Ovary (tissue), 10 donors: ENCODE measurements at regions of chr4 and their contacts with region 1.

Region 1: DNA sequence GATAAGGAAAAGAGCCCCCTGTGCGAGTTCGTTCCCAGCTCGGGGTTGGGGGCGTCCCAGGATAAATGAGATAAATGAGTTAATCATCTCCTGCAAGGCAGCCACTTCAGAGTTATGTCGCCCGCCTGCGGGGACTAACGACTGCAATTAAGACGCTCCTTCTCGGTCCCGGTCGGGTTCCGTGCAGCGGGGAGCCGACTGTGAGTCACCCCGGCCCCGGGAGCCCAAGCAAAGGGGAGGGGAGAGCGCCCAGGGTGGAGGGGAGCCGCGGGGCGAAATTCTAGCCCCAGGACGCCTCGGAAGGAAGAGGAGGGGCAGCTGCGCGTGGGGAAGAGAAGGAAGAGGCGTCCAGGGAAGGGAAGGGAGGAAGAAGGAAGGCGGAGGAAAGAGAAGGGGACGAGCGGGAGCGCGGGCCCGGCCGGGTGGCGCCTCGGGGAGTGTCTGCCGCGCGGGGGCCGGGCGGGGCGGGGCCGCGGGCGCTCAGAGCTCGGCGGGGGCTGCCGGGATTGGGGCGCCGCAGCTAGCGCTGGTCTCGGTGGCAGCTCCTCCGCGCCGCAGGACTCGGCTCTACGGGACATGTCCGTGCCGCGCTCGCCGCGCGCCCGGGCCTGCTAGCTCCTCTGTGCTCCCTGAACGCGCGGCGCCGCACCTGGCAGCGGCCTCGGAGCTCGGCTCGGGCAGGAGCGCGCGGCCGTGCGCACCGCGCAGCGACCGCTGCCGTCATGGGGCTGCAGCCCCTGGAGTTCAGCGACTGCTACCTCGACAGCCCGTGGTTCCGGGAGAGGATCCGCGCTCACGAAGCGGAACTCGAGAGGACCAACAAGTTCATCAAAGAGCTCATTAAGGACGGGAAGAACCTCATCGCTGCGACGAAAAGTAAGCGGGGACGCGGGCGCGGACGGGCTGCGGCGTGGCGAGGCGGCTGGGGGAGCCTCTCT is at the start of gene ARHGAP10:
- DNase-seq: peak; percentile 76 to 86 (median 81)
- H3K4me3 ChIP-seq: peak within 1 kb of the TSS; percentile 72
- H3K27ac ChIP-seq: peak within 1 kb of the TSS; percentile 95 to 97
- H3K4me1 ChIP-seq: peaks cover 8% of the 10 kb centered on the region
- H3K27me3 ChIP-seq: no peaks in the 10 kb centered on the region
- CTCF ChIP-seq: peak in 1 of 3 donors; percentile 37
- EP300 ChIP-seq: no peak
- POLR2A ChIP-seq: peak; percentile 59
- total RNA-seq, gene ARHGAP10: 51.1 to 76.7 (median 70.6) TPM

Region 2: GRCh38 chr4:147813109-147813773 is 81.4 kb after region 1 on chr4:
- intact Hi-C with region 1: loop called in 1 of 4 experiments (anchors 10 kb)
- DNase-seq: no peak
- H3K4me3 ChIP-seq: no peak overlapping the region
- H3K27ac ChIP-seq: no peak overlapping the region
- H3K4me1 ChIP-seq: peaks cover 40% of the 10 kb centered on the region
- H3K27me3 ChIP-seq: no peaks in the 10 kb centered on the region
- CTCF ChIP-seq: no peak
- EP300 ChIP-seq: no peak
- POLR2A ChIP-seq: no peak

Region 3: DNA sequence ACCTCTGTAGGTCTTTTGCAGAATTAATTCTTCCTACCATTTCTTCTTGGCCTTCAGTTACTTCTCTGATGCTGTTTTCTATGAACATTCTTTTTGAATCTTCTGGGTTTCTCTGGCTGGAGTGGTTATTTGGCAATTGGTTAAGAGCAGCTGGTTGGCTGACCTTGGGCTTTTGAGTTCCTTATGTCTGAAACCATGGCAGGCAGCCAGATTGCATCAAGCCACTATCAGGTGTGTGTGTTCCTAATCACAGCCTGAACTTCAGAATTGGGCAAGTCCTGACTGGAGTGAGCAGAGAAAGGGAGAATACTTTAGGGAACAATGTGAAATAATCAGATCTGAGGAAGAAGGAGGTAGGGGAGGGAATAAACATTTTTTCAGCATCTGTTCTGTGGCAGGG is 90.3 kb after region 1 on chr4:
- intact Hi-C with region 1: loop called in 2 of 4 experiments (anchors 10 kb)
- DNase-seq: peak; percentile 85 to 97 (median 96)
- H3K4me3 ChIP-seq: no peak overlapping the region
- H3K27ac ChIP-seq: peak overlapping the region in 1 of 2 donors; percentile 54
- H3K4me1 ChIP-seq: peaks cover 23% of the 10 kb centered on the region
- H3K27me3 ChIP-seq: no peaks in the 10 kb centered on the region
- CTCF ChIP-seq: no peak
- EP300 ChIP-seq: no peak
- POLR2A ChIP-seq: no peak

Region 4: GRCh38 chr4:147855571-147856009 is 123.7 kb after region 1 on chr4:
- intact Hi-C with region 1: loop called in 1 of 4 experiments (anchors 5 kb)
- DNase-seq: peak in 1 of 5 donors; percentile 35
- H3K4me3 ChIP-seq: no peak overlapping the region
- H3K27ac ChIP-seq: peak overlapping the region; percentile 19 to 36
- H3K4me1 ChIP-seq: peaks cover 16% of the 10 kb centered on the region
- H3K27me3 ChIP-seq: no peaks in the 10 kb centered on the region
- CTCF ChIP-seq: no peak
- EP300 ChIP-seq: no peak
- POLR2A ChIP-seq: no peak

Region 5: DNA sequence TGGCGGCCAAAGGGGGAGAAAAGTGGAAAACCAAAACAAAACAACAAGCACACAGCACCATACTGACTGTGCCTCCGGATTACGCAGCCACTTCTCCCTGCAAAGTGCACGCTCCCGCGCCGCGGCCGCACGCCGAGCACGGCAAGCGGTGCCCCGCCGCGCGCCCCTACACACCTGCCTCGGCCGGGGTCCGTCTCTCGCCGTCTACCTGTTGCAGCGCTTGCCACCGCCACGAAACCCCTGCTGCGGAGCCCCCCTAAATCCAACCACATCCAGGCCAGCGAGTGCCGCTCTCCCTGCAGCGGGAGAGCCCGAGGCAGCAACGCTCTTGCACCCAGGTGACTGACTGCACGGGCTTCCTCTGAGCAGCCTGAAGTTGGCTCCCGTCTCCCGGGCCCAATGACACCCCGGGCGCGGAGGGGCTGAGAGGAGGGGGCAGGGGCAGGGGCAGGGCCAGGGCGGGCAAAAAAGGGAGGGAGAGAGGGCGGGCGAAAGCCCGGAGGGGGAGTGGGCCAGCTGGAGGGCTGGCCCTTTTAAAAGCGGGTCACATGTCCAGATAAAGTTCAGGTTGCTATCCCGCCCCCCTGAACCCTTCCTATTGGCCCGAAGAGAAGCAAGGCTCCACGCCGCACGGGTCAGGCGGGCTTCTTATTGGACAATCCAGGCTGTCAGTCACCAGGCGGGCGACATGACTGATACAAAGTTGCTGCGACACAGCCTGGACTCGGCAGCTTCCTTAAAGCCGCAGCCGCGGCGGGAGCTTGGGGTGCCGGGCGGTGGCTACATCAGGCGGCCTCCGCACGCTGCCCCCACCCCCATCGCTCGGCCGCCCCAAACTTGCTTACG is 710.4 kb after region 1 on chr4 and contains the start of gene NR3C2:
- intact Hi-C with region 1: loop called in 1 of 4 experiments (anchors 2 kb)
- DNase-seq: peak; percentile 97 to 99 (median 99)
- H3K4me3 ChIP-seq: peak within 1 kb of the TSS; percentile 97
- H3K27ac ChIP-seq: peak within 1 kb of the TSS; percentile 91 to 93
- H3K4me1 ChIP-seq: peaks cover 2% of the 10 kb centered on the region
- H3K27me3 ChIP-seq: no peaks in the 10 kb centered on the region
- CTCF ChIP-seq: peak in 1 of 3 donors; percentile 22
- EP300 ChIP-seq: no peak
- POLR2A ChIP-seq: peak; percentile 100
- total RNA-seq, gene NR3C2: 11.0 to 37.5 (median 25.9) TPM